ENCODE measurements at regions of chr4 and their contacts with region 1.

Region 1: GRCh38 chr4:169437299-169438047 is 166.7 kb upstream of the SH3RF1 start:
- DNase-seq: peak; percentile 89
- ATAC-seq: peak; percentile 93
- H3K4me3 ChIP-seq: no peak overlapping the region; the same call in 1 of the 2 replicates
- H3K27ac ChIP-seq: peak overlapping the region; percentile 98
- H3K4me1 ChIP-seq: peaks cover 42% of the 10 kb centered on the region
- H3K27me3 ChIP-seq: no peaks in the 10 kb centered on the region
- CTCF ChIP-seq: no peak
- EP300 ChIP-seq: no peak
- POLR2A ChIP-seq: peak; percentile 61
- RAD21 ChIP-seq: no peak

Region 2: GRCh38 chr4:169099771-169100180 is 337.7 kb before region 1 on chr4:
- CTCF ChIA-PET with region 1: no interaction called
- POLR2A ChIA-PET with region 1: interaction called, 3 read pairs
- RAD21 ChIA-PET with region 1: interaction called, 16 read pairs
- SMC1A ChIA-PET with region 1: interaction called, 3 read pairs
- in situ Hi-C with region 1: no loop called
- intact Hi-C with region 1: no loop called
- DNase-seq: peak; percentile 34
- ATAC-seq: peak; percentile 8
- H3K4me3 ChIP-seq: no peak overlapping the region
- H3K27ac ChIP-seq: no peak overlapping the region
- H3K4me1 ChIP-seq: peaks cover 33% of the 10 kb centered on the region
- H3K27me3 ChIP-seq: no peaks in the 10 kb centered on the region
- CTCF ChIP-seq: no peak
- EP300 ChIP-seq: no peak
- POLR2A ChIP-seq: no peak
- RAD21 ChIP-seq: no peak

Region 3: DNA sequence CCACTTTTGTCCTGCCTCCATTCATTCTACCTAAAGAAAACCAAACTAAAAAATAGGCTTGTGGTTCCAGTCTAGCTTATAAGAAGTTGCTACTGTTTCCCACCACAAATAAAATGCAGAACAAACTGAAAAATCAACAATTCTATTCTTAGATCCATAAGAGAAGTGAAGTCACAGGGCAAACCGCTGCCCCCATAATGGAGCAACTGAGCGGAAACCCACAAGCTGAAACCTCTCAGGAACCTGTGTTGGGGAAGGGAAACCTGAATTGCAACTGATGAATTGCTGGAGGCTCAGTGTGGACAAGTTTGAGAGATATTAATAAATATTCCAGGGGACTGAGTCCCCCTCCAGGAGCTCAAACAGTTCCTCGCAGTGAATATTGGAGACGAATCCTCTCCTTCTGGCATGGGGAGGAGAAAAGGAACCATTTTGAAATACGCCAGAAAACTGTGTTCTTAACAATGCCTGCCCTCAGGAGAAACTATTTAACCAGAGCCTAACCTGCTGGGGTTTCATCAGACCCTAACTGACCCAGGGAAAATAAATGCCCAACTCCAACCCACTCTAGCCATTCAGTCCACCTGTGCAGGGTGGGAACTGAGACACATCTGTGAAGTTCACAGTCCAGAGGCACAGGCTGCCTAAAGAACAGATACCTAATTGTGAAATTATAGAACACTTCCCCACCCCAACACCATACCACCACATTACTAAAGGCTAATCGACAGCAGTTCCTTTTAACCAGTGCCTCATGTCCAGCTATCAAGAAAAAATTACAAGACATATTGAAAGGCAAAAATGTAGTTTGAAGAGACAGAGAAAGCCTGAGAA is 143.9 kb before region 1 on chr4:
- CTCF ChIA-PET with region 1: interaction called, 14 read pairs
- POLR2A ChIA-PET with region 1: interaction called, 7 read pairs
- RAD21 ChIA-PET with region 1: interaction called, 38 read pairs
- SMC1A ChIA-PET with region 1: interaction called, 40 read pairs
- in situ Hi-C with region 1: no loop called
- intact Hi-C with region 1: loop called (anchors 2 kb)
- DNase-seq: peak; percentile 90
- ATAC-seq: peak; percentile 92
- H3K4me3 ChIP-seq: peak overlapping the region; percentile 26; the same call in 1 of the 2 replicates
- H3K27ac ChIP-seq: peak overlapping the region; percentile 85
- H3K4me1 ChIP-seq: peaks cover 33% of the 10 kb centered on the region
- H3K27me3 ChIP-seq: no peaks in the 10 kb centered on the region
- CTCF ChIP-seq: no peak
- EP300 ChIP-seq: peak; percentile 72 to 83; a peak in 2 of 4 replicates
- POLR2A ChIP-seq: no peak
- RAD21 ChIP-seq: peak; percentile 30; the same call in 1 of the 2 replicates

Region 4: GRCh38 chr4:169362607-169363006 is 74.9 kb before region 1 on chr4:
- CTCF ChIA-PET with region 1: interaction called, 3 read pairs
- POLR2A ChIA-PET with region 1: interaction called, 4 read pairs
- RAD21 ChIA-PET with region 1: interaction called, 10 read pairs
- SMC1A ChIA-PET with region 1: interaction called, 9 read pairs
- in situ Hi-C with region 1: no loop called
- intact Hi-C with region 1: no loop called
- DNase-seq: no peak
- ATAC-seq: no peak; the same call in 2 of the 3 replicates
- H3K4me3 ChIP-seq: no peak overlapping the region
- H3K27ac ChIP-seq: no peak overlapping the region
- H3K4me1 ChIP-seq: no peaks in the 10 kb centered on the region
- H3K27me3 ChIP-seq: no peaks in the 10 kb centered on the region
- CTCF ChIP-seq: no peak
- EP300 ChIP-seq: no peak
- POLR2A ChIP-seq: no peak
- RAD21 ChIP-seq: no peak

Region 5: GRCh38 chr4:169404960-169405359 is 32.5 kb before region 1 on chr4:
- CTCF ChIA-PET with region 1: interaction called, 33 read pairs
- POLR2A ChIA-PET with region 1: interaction called, 8 read pairs
- RAD21 ChIA-PET with region 1: interaction called, 112 read pairs
- SMC1A ChIA-PET with region 1: interaction called, 212 read pairs
- in situ Hi-C with region 1: no loop called
- intact Hi-C with region 1: loop called (anchors 2 kb)
- DNase-seq: no peak
- ATAC-seq: peak; percentile 22; the same call in 2 of the 3 replicates
- H3K4me3 ChIP-seq: no peak overlapping the region
- H3K27ac ChIP-seq: no peak overlapping the region
- H3K4me1 ChIP-seq: peaks cover 9% of the 10 kb centered on the region
- H3K27me3 ChIP-seq: no peaks in the 10 kb centered on the region
- CTCF ChIP-seq: no peak
- EP300 ChIP-seq: no peak
- POLR2A ChIP-seq: no peak
- RAD21 ChIP-seq: no peak

Region 6: GRCh38 chr4:169416997-169417396 is 20.5 kb before region 1 on chr4:
- CTCF ChIA-PET with region 1: interaction called, 33 read pairs
- POLR2A ChIA-PET with region 1: interaction called, 27 read pairs
- RAD21 ChIA-PET with region 1: interaction called, 112 read pairs
- SMC1A ChIA-PET with region 1: interaction called, 212 read pairs
- in situ Hi-C with region 1: no loop called
- intact Hi-C with region 1: loop called (anchors 1 kb)
- DNase-seq: no peak
- ATAC-seq: peak; percentile 90
- H3K4me3 ChIP-seq: no peak overlapping the region
- H3K27ac ChIP-seq: no peak overlapping the region
- H3K4me1 ChIP-seq: peaks cover 3% of the 10 kb centered on the region
- H3K27me3 ChIP-seq: no peaks in the 10 kb centered on the region
- CTCF ChIP-seq: no peak
- EP300 ChIP-seq: peak in 1 of 2 experiments; percentile 18; a peak in 1 of 4 replicates
- POLR2A ChIP-seq: no peak
- RAD21 ChIP-seq: 0 out of 2 replicates have a peak, but pooled peaks have one; percentile 8

Region 7: GRCh38 chr4:169682372-169683047 is 245.0 kb after region 1 on chr4:
- CTCF ChIA-PET with region 1: no interaction called
- POLR2A ChIA-PET with region 1: no interaction called
- RAD21 ChIA-PET with region 1: no interaction called
- SMC1A ChIA-PET with region 1: no interaction called
- in situ Hi-C with region 1: no loop called
- intact Hi-C with region 1: no loop called
- DNase-seq: no peak
- ATAC-seq: no peak
- H3K4me3 ChIP-seq: no peak overlapping the region
- H3K27ac ChIP-seq: no peak overlapping the region
- H3K4me1 ChIP-seq: no peaks in the 10 kb centered on the region
- H3K27me3 ChIP-seq: no peaks in the 10 kb centered on the region
- CTCF ChIP-seq: no peak
- EP300 ChIP-seq: no peak
- POLR2A ChIP-seq: no peak
- RAD21 ChIP-seq: no peak

Region 8: DNA sequence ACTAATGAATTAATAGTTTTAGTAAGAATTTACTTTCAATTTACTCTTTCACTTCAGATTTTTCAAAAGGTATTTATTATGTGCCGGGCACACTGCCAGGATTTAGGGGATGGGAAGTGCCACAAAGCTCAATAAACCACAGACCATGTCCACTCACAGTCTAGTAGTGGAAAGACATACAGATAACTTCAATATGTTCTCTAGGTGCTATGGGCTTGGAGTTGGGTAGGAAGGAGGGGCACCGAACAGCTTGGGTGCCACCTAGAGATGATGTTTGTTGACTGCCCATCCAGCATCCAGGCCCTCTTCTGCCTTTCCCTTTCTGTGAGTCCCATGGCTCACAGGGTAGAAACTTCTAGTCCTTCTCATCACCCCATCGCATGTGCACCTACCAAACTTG is 570.9 kb after region 1 on chr4:
- CTCF ChIA-PET with region 1: no interaction called
- POLR2A ChIA-PET with region 1: no interaction called
- RAD21 ChIA-PET with region 1: no interaction called
- SMC1A ChIA-PET with region 1: no interaction called
- in situ Hi-C with region 1: no loop called
- intact Hi-C with region 1: no loop called
- DNase-seq: no peak
- ATAC-seq: peak; percentile 82
- H3K4me3 ChIP-seq: no peak overlapping the region
- H3K27ac ChIP-seq: no peak overlapping the region
- H3K4me1 ChIP-seq: no peaks in the 10 kb centered on the region; the same call in 1 of the 2 replicates
- H3K27me3 ChIP-seq: no peaks in the 10 kb centered on the region
- CTCF ChIP-seq: peak in 1 of 3 experiments; percentile 20; a peak in 2 of 6 replicates
- EP300 ChIP-seq: no peak
- POLR2A ChIP-seq: no peak
- RAD21 ChIP-seq: no peak

Measured in GM12878 (cell line).